ENCODE measurements at regions of chr1 and their contacts with region 1.

Region 1: DNA sequence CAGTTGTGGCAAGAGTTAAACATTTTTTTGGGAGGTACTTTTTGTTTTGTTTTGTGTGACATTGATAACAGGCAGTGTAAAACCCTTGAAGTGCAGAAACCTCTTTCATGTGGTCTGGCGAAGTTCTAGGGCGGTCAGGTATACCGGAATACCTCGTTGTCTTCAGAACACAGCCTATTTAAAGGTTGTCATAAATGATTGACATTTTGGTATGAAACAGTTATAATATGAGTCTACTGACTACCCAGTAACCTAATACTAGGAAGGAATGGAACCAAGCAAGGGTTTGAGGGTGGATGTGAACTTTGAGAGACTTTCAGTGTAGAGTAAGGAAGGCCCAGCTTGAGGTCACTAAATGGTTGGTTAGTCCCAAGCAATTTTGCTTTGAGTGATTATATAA is 40.5 kb downstream of the PATJ start:
- DNase-seq: no peak
- H3K4me3 ChIP-seq: no peak overlapping the region
- H3K27ac ChIP-seq: no peak overlapping the region
- H3K4me1 ChIP-seq: no peaks in the 10 kb centered on the region
- CTCF ChIP-seq: no peak

Region 2: GRCh38 chr1:61636815-61637214 is 146.0 kb before region 1 on chr1:
- CTCF ChIA-PET with region 1: no interaction called
- POLR2A ChIA-PET with region 1: no interaction called
- intact Hi-C with region 1: no loop called
- DNase-seq: no peak
- H3K4me3 ChIP-seq: no peak overlapping the region
- H3K27ac ChIP-seq: no peak overlapping the region
- H3K4me1 ChIP-seq: no peaks in the 10 kb centered on the region
- CTCF ChIP-seq: no peak

Region 3: GRCh38 chr1:61797045-61797755 is 14.4 kb after region 1 on chr1:
- CTCF ChIA-PET with region 1: no interaction called
- POLR2A ChIA-PET with region 1: interaction called, 13 read pairs
- intact Hi-C with region 1: no loop called
- DNase-seq: no peak
- H3K4me3 ChIP-seq: no peak overlapping the region
- H3K27ac ChIP-seq: no peak overlapping the region
- H3K4me1 ChIP-seq: no peaks in the 10 kb centered on the region
- CTCF ChIP-seq: no peak

Measured in OCI-LY7 (cell line).